ENCODE measurements at regions of chr10 and their contacts with region 1.

Region 1: GRCh38 chr10:27838361-27838760 is 92.7 kb upstream of the MKX start:
- DNase-seq: no peak
- ATAC-seq: no peak

Region 2: DNA sequence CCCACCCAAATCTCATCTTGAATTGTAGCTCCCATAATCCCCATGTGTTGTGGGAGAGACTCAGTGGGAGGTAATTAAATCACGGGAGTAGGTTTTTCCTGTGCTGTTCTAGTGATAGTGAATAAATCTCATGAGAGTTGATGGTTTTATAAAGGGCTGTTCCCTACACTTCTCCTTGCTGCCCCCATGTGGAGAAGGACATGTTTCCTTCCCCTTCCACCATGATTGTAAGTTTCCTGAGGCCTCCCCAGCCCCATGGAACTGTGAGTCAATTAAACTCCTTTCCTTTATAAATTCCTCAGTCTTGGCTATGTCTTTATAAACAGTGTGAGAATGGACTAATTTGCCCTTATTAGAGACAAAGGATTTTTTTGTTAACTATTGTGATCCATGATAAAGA is 44.2 kb before region 1 on chr10:
- intact Hi-C with region 1: no loop called
- DNase-seq: no peak
- ATAC-seq: no peak

Region 3: GRCh38 chr10:27912231-27912630 is 73.9 kb after region 1 on chr10:
- intact Hi-C with region 1: loop called in 1 of 2 experiments (anchors 2 kb)
- DNase-seq: no peak
- ATAC-seq: no peak

Region 4: GRCh38 chr10:28291881-28292297 is 453.5 kb after region 1 on chr10:
- intact Hi-C with region 1: no loop called
- DNase-seq: peak; percentile 33
- ATAC-seq: peak in 1 of 2 donors; percentile 97